HepG2 (cell line): ENCODE measurements at regions of chr4 and their contacts with region 1.

Region 1: GRCh38 chr4:2914246-2914645 is 49.0 kb downstream of the NOP14 start:
- DNase-seq: no peak
- ATAC-seq: no peak
- H3K4me3 ChIP-seq: no peak overlapping the region
- H3K27ac ChIP-seq: no peak overlapping the region
- H3K4me1 ChIP-seq: no peaks in the 10 kb centered on the region
- H3K27me3 ChIP-seq: no peaks in the 10 kb centered on the region
- CTCF ChIP-seq: no peak
- EP300 ChIP-seq: no peak
- POLR2A ChIP-seq: no peak
- RAD21 ChIP-seq: no peak

Region 2: DNA sequence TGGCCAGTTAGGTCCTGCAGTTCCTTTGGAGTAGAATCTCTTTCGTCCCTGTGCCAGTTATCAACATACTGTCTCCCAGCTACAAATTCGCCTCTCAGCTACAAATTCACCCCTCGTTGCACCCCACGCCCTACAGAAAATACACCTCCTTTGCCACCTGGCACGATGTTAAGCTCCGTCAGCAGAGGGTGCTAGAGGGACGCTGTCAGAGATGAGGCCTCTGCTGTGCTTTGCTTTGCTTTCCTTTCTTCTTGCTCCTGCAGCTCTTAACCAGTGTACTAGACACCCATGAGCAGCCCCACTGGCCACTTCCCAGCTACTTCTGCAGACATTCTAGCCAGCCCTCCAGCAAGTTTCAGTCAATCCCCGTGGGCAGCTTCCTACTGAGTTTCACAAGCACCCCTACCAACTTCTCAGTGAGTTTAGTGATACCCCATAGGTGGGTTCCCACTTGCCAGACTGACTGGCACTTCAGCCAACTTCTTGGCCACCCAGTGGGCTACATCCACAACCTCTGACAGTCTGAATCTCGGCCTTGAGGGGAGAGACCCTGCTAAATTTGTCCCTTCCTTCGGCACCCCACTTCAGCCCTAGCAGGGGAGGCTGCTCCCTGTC is 694.1 kb before region 1 on chr4:
- CTCF ChIA-PET with region 1: no interaction called
- POLR2A ChIA-PET with region 1: no interaction called
- in situ Hi-C with region 1: no loop called
- intact Hi-C with region 1: no loop called
- DNase-seq: peak; percentile 61
- ATAC-seq: peak; percentile 92
- H3K4me3 ChIP-seq: no peak overlapping the region
- H3K27ac ChIP-seq: no peak overlapping the region
- H3K4me1 ChIP-seq: peaks cover 9% of the 10 kb centered on the region
- H3K27me3 ChIP-seq: no peaks in the 10 kb centered on the region
- CTCF ChIP-seq: peak; percentile 96
- EP300 ChIP-seq: no peak
- POLR2A ChIP-seq: no peak
- RAD21 ChIP-seq: peak; percentile 83

Region 3: DNA sequence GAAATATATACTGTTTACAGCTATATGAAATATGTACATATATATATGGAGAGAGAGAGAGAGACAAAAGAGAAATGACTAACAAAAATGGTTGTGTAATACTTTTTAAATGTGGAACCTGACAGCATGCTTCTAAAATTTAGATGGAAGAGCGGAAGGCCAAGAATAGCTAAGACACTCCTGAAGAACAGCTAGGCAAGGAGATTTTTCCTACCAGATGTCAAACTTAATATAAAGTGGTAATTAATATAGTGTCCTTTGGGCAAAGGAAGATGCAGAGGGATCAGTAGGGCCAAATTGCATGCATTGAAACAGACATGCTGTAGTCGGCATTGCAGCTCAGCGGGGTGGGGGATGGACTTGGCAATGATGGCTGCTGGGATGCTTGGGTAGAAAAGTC is 25.4 kb before region 1 on chr4:
- CTCF ChIA-PET with region 1: no interaction called
- POLR2A ChIA-PET with region 1: no interaction called
- in situ Hi-C with region 1: no loop called
- intact Hi-C with region 1: loop called (anchors 1 kb)
- DNase-seq: no peak
- ATAC-seq: no peak
- H3K4me3 ChIP-seq: no peak overlapping the region
- H3K27ac ChIP-seq: no peak overlapping the region
- H3K4me1 ChIP-seq: no peaks in the 10 kb centered on the region
- H3K27me3 ChIP-seq: no peaks in the 10 kb centered on the region
- CTCF ChIP-seq: no peak
- EP300 ChIP-seq: no peak
- POLR2A ChIP-seq: no peak
- RAD21 ChIP-seq: no peak